Panc1 (cell line): ENCODE measurements at regions of chr1 and their contacts with region 1.

Region 1: DNA sequence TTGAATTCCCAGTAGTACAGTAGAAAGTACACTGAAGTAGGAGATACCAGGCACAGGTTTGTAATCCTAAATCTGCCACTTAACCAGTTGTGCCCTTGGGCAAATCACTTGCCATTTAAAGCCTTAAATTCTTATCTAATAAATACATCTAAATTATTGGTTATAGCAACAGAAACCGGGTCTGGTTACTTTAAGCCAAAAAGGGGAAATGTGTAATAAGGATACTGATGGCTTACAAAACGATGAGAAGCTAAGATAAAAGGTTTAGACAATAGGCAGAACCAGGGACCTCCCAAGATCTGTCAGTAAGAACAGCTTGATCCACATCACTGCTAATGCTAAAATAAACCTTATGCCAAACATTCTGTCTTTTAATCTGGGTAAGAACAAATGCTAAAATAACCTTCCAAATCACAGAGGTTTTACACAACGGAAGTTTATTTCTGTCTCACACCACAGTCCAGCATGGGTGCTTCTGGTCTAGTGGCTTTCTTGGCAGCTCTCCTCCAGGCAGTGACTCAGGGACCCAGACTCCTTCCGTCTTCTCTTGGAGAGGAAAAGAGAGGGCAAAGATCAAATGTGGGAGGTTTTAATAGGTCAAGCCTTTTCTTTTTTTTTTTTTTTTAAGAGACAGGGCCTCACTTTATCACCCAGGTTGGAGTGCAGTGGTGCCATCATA is 16.5 kb upstream of the ZMYM1 start:
- DNase-seq: no peak
- ATAC-seq: no peak
- H3K4me3 ChIP-seq: no peak overlapping the region
- H3K27ac ChIP-seq: no peak overlapping the region
- H3K4me1 ChIP-seq: no peaks in the 10 kb centered on the region
- H3K27me3 ChIP-seq: peaks cover 3% of the 10 kb centered on the region
- CTCF ChIP-seq: no peak

Region 2: GRCh38 chr1:34034036-34034435 is 1028.6 kb before region 1 on chr1:
- CTCF ChIA-PET with region 1: no interaction called
- POLR2A ChIA-PET with region 1: interaction called, 18 read pairs
- in situ Hi-C with region 1: no loop called
- intact Hi-C with region 1: no loop called
- DNase-seq: no peak
- ATAC-seq: no peak
- H3K4me3 ChIP-seq: no peak overlapping the region
- H3K27ac ChIP-seq: no peak overlapping the region
- H3K4me1 ChIP-seq: no peaks in the 10 kb centered on the region
- H3K27me3 ChIP-seq: peaks cover 2% of the 10 kb centered on the region
- CTCF ChIP-seq: no peak

Region 3: GRCh38 chr1:35016406-35016805 is 46.3 kb before region 1 on chr1:
- CTCF ChIA-PET with region 1: no interaction called
- POLR2A ChIA-PET with region 1: interaction called, 12 read pairs
- in situ Hi-C with region 1: no loop called
- intact Hi-C with region 1: no loop called
- DNase-seq: no peak
- ATAC-seq: no peak
- H3K4me3 ChIP-seq: no peak overlapping the region
- H3K27ac ChIP-seq: no peak overlapping the region
- H3K4me1 ChIP-seq: no peaks in the 10 kb centered on the region
- H3K27me3 ChIP-seq: no peaks in the 10 kb centered on the region
- CTCF ChIP-seq: no peak